ENCODE measurements at regions of chr3 and their contacts with region 1.

Region 1: DNA sequence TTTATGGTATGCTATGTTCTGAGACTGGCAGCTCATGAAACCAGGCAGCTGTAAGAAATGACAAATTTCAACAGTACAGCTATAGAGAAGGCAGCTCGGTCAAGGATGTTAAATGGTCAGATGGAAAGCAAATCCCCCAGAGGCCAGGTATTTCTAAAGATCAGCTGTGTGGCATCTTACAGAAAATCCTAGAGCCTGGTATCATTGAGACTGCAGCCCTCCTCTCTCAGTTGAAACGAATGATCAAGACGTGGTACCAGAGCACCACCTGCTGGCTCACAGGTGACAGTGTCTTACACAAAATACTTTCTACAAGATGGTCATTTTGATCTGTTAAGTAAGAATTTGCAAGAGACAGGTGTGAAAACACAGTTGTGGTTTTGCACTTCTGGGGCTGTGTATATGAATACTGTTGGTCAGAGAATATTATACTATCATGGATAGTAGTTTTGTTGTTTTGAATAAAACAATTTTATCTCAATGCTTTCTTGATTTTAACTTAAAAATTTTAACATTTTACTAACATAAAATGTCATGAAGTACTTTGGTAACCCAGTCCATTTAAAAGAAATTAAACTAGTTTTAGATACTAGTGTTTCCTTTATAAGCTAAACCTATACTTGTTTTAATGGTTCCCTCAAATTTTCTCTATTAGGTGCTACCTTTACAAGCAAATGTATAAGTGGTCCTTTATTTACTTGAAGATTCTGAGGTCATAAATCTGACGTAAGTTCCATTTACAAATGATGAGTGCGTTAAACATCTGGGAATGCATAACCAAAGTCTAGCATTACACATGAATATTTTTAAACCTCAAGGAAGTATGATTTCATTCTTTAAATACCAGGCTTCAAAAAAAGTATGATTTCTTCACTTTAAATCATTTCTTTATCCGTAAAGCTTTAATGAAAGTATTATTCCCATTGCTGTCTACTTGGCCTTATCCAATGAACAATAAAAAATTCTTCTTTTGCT is 121.8 kb downstream of the PDZRN3 start:
- DNase-seq: peak in 3 of 4 donors; percentile 44 to 85 (median 59)
- ATAC-seq: peak; percentile 94
- H3K4me3 ChIP-seq: no peak overlapping the region
- H3K27ac ChIP-seq: no peak overlapping the region
- H3K4me1 ChIP-seq: peaks cover 4 to 9% of the 10 kb centered on the region in 2 donors
- H3K27me3 ChIP-seq: peaks cover 0 to 10% of the 10 kb centered on the region in 2 donors
- CTCF ChIP-seq: peak; percentile 49 to 66

Region 2: DNA sequence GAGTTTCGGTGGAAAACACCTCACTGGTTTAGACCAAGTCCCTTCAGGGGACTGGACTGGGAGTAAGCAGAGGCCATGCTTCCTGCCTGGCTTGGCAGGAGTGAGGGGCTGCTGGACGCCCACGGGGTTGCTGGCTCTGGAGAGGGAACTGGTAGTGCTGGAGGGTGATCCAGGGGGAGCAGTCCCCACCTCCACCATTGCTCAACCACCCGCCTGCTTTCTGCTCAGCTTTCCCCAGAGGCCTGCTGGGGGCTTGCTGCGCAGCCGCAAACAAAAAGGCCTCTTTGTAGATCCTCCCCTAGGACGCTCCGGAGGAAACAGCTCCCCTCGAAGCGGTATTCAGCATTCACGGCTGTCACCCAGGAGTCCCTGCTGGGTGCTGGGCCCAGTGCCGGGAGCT is 407.9 kb before region 1 on chr3:
- intact Hi-C with region 1: loop called in 1 of 2 experiments (anchors 5 kb)
- DNase-seq: peak in 1 of 4 donors; percentile 10
- ATAC-seq: no peak
- H3K4me3 ChIP-seq: no peak overlapping the region
- H3K27ac ChIP-seq: peak overlapping the region in 1 of 2 donors; percentile 31
- H3K4me1 ChIP-seq: peaks cover 0 to 12% of the 10 kb centered on the region in 2 donors
- H3K27me3 ChIP-seq: no peaks in the 10 kb centered on the region
- CTCF ChIP-seq: no peak

Region 3: GRCh38 chr3:73848173-73848906 is 345.4 kb after region 1 on chr3:
- intact Hi-C with region 1: loop called in 1 of 2 experiments (anchors 10 kb)
- DNase-seq: peak in 1 of 4 donors; percentile 36
- ATAC-seq: peak; percentile 51
- H3K4me3 ChIP-seq: no peak overlapping the region
- H3K27ac ChIP-seq: no peak overlapping the region
- H3K4me1 ChIP-seq: no peaks in the 10 kb centered on the region
- H3K27me3 ChIP-seq: no peaks in the 10 kb centered on the region
- CTCF ChIP-seq: peak; percentile 24 to 48